HepG2 (cell line): ENCODE measurements at regions of chr1 and their contacts with region 1.

Region 1: GRCh38 chr1:109181105-109181806 is 32.5 kb upstream of the SARS1 start:
- DNase-seq: peak; percentile 96
- ATAC-seq: peak; percentile 88
- H3K4me3 ChIP-seq: peak overlapping the region in 1 of 3 experiments; percentile 31; a peak in 3 of 6 replicates
- H3K27ac ChIP-seq: peak overlapping the region; percentile 69
- H3K4me1 ChIP-seq: peaks cover 73% of the 10 kb centered on the region
- H3K27me3 ChIP-seq: no peaks in the 10 kb centered on the region; a peak in 1 of 5 replicates
- CTCF ChIP-seq: no peak
- EP300 ChIP-seq: peak in 1 of 2 experiments; percentile 87; a peak in 2 of 4 replicates
- POLR2A ChIP-seq: no peak
- RAD21 ChIP-seq: no peak

Region 2: DNA sequence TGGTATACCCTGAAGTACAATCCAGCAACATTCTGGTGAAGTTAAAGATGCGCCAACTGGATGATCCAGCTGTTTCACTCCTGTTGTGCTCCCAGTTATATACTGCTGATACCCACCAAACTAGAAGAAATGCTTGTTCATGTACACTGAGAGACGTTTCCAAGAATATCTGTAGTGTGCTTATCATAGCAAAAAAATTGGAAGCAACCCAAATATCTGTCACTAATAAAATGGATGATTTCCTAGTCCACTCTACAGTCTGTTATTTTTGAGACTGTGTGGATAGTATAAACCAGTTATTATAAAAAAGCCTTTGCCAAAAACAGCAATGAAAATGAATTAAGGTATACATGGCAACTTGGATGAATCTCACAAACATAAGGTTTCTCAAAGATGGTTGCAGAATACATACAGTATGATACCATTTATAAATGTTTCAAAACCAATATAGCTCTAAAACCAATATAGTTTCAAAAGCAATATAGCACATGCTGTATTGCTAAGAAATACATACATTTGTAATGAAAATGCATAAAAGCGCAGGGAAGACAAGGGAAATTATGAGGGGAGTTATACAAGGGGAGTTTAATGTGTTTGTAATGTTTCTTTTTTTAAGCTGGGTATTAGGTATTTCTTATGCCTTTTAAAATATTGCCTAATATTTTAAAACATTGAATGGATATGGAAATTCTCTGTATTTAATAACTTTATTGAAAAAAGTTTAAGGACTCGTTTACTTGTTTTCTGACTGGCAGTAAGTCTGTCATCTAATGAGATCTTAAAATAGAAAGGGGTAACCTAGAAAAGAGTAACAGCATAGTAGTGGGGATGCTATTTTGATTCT is 267.9 kb before region 1 on chr1:
- CTCF ChIA-PET with region 1: no interaction called
- POLR2A ChIA-PET with region 1: no interaction called
- in situ Hi-C with region 1: no loop called
- intact Hi-C with region 1: no loop called
- DNase-seq: no peak
- ATAC-seq: no peak
- H3K4me3 ChIP-seq: no peak overlapping the region
- H3K27ac ChIP-seq: no peak overlapping the region
- H3K4me1 ChIP-seq: no peaks in the 10 kb centered on the region
- H3K27me3 ChIP-seq: no peaks in the 10 kb centered on the region
- CTCF ChIP-seq: no peak
- EP300 ChIP-seq: no peak
- POLR2A ChIP-seq: no peak
- RAD21 ChIP-seq: no peak

Region 3: GRCh38 chr1:109170035-109170764 is 11.1 kb before region 1 on chr1:
- CTCF ChIA-PET with region 1: no interaction called
- POLR2A ChIA-PET with region 1: interaction called, 3 read pairs
- in situ Hi-C with region 1: no loop called
- intact Hi-C with region 1: loop called (anchors 1 kb)
- DNase-seq: no peak
- ATAC-seq: no peak
- H3K4me3 ChIP-seq: no peak overlapping the region
- H3K27ac ChIP-seq: no peak overlapping the region
- H3K4me1 ChIP-seq: peaks cover 19% of the 10 kb centered on the region
- H3K27me3 ChIP-seq: peaks cover 0 to 10% of the 10 kb centered on the region in 2 experiments; a peak in 1 of 5 replicates
- CTCF ChIP-seq: no peak
- EP300 ChIP-seq: no peak
- POLR2A ChIP-seq: no peak
- RAD21 ChIP-seq: no peak